AG04449 (cell line): ENCODE measurements at regions of chr12 and their contacts with region 1.

Region 1: GRCh38 chr12:48061948-48062719 is 43.7 kb downstream of the SENP1 start:
- DNase-seq: no peak
- H3K4me3 ChIP-seq: no peak overlapping the region
- CTCF ChIP-seq: no peak

Region 2: GRCh38 chr12:47954058-47954457 is 108.1 kb before region 1 on chr12:
- CTCF ChIA-PET with region 1: no interaction called
- POLR2A ChIA-PET with region 1: no interaction called
- DNase-seq: no peak
- H3K4me3 ChIP-seq: no peak overlapping the region
- CTCF ChIP-seq: no peak

Region 3: GRCh38 chr12:48037267-48037915 is 24.7 kb before region 1 on chr12:
- CTCF ChIA-PET with region 1: no interaction called
- POLR2A ChIA-PET with region 1: no interaction called
- DNase-seq: no peak
- H3K4me3 ChIP-seq: no peak overlapping the region
- CTCF ChIP-seq: no peak

Region 4: DNA sequence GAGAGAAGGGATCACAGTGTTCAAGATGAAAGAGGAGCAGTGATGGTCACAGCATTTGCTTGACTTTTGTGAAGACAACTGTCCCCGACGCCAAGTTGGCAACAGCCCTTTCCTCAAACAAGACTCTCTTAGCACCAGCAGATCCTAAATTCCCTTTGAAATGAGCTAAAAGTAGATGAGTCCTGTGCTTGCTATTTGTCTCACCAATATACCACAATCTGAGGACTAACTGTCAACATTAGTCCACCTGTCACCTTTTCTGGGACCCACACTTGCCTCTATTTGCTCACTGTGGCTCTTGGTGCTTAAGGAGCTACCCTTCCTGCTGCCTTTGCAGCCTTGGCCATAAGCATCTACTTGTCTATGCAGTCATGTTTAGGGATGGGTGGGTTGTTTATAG is 10.5 kb before region 1 on chr12:
- CTCF ChIA-PET with region 1: interaction called, 15 read pairs
- POLR2A ChIA-PET with region 1: no interaction called
- DNase-seq: no peak
- H3K4me3 ChIP-seq: no peak overlapping the region
- CTCF ChIP-seq: no peak